Activated CD8-positive, alpha-beta memory T cell treated with anti-CD3 and anti-CD28 coated beads, Interleukin-2, amount 10 ng/mL, durations not matched to agents 7 days and 5 days (primary cell): ENCODE measurements at regions of chr11 and their contacts with region 1.

Region 1: GRCh38 chr11:46616998-46617675 is at the starts of genes ATG13 and HARBI1:
- DNase-seq: peak; percentile 94
- ATAC-seq: peak; percentile 97
- H3K4me3 Mint-ChIP-seq: peak within 1 kb of the TSS; percentile 89
- H3K27ac Mint-ChIP-seq: peak within 1 kb of the TSS; percentile 99
- H3K4me1 Mint-ChIP-seq: peaks cover 40% of the 10 kb centered on the region
- H3K27me3 Mint-ChIP-seq: no peaks in the 10 kb centered on the region
- total RNA-seq, gene ATG13: 64.0 to 72.9 TPM
- total RNA-seq, gene HARBI1: 5.9 to 6.6 TPM

Region 2: DNA sequence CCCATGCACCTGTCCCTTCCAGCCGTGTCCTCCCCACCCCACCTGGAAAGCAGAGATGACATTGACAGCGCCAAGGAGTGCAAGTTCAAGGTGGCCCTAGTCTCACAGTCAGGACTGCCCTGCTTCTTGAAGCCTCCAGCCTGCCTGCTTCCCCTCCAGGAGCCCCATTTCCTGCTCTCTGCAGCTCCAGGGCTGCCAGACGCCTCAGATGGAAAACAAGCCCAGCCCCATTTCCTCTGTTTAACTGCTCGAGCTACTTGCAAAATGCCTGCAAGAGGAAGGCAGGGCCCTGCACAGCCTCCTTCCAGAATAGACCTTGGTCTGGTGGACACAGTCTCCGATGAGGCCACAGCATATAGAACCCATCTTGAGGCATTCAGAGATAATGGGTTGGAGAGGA is 274.9 kb before region 1 on chr11:
- CTCF ChIA-PET with region 1: no interaction called
- DNase-seq: no peak
- ATAC-seq: no peak
- H3K4me3 Mint-ChIP-seq: no peak overlapping the region
- H3K27ac Mint-ChIP-seq: no peak overlapping the region
- H3K4me1 Mint-ChIP-seq: peaks cover 39% of the 10 kb centered on the region
- H3K27me3 Mint-ChIP-seq: peaks cover 23% of the 10 kb centered on the region

Region 3: GRCh38 chr11:46392421-46393230 is 224.5 kb before region 1 on chr11:
- CTCF ChIA-PET with region 1: interaction called, 35 read pairs
- DNase-seq: peak; percentile 85
- ATAC-seq: peak; percentile 84
- H3K4me3 Mint-ChIP-seq: peak overlapping the region; percentile 51
- H3K27ac Mint-ChIP-seq: no peak overlapping the region
- H3K4me1 Mint-ChIP-seq: peaks cover 32% of the 10 kb centered on the region
- H3K27me3 Mint-ChIP-seq: peaks cover 46% of the 10 kb centered on the region

Region 4: DNA sequence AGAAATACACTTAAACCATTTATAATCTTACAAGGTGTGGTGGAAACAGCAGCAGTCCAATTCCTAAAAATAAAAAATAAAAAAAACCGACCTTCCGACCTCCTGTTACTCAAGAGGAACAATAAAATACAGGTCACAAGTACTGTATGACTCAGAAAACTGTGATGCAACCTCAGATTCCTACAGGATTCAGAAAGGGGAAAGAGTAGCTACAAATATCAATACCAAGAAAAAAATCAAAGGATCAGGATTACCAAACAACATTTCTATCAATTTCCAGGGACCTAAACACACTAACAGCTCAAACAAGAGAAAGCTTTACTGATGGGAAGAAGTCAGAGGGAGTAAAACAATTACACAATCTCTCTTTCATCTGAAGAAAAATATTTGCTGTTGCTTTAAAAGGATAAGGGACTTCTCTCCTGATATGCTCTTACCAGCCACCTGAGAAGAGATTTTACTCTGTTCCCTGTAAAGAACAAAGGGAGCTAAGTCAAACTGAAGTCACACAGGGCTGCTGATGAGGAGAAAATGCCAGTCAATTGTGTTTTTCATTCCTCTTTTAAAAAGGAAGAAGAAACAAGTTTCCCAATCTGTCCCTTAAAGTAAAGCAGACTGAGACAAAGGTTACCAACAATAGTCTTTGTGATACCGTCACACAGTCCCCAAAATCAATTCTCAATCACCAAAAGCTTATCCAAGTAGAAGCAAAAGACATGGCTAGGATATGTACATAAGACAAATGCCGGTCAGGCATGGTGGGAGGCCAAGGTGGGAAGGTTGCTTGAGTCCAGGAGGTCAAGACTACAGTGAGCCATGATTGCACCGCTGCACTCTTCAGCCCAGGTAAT is 62.7 kb before region 1 on chr11:
- CTCF ChIA-PET with region 1: interaction called, 13 read pairs
- DNase-seq: no peak
- ATAC-seq: no peak
- H3K4me3 Mint-ChIP-seq: no peak overlapping the region
- H3K27ac Mint-ChIP-seq: peak overlapping the region; percentile 58
- H3K4me1 Mint-ChIP-seq: peaks cover 51% of the 10 kb centered on the region
- H3K27me3 Mint-ChIP-seq: no peaks in the 10 kb centered on the region

Region 5: DNA sequence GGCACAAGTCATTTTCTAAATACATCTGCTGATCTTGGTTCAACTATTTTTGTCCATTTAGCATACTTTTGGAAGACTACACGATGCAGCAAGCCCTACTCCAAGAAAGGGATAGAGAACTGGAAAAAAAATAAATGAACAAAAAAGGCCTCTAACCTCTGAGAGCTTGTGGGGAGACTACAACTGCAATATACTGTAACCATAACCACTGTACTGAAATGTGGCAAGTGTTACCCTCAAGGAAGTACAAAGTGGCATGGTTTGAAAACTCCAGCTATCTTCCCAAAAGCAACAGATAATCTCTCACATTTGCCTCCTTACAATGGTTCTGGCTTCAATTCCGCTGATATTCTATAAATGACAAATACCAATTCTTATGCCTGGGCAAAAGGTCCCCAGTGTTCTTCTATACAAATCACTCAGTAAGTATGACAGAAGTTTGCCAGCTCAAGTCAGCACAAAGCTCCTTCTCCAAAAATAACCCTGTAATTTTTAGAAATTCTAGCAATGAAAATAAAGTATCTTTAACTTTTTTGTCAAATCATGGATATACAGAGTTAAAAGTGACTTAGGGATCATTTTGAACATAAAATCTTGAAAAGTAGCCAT is 46.2 kb before region 1 on chr11:
- CTCF ChIA-PET with region 1: interaction called, 12 read pairs
- DNase-seq: no peak
- ATAC-seq: peak; percentile 57
- H3K4me3 Mint-ChIP-seq: no peak overlapping the region
- H3K27ac Mint-ChIP-seq: peak overlapping the region; percentile 29
- H3K4me1 Mint-ChIP-seq: peaks cover 28% of the 10 kb centered on the region
- H3K27me3 Mint-ChIP-seq: no peaks in the 10 kb centered on the region

Region 6: GRCh38 chr11:46632502-46632901 is 15.4 kb after region 1 on chr11:
- CTCF ChIA-PET with region 1: interaction called, 15 read pairs
- DNase-seq: peak; percentile 61
- ATAC-seq: peak; percentile 72
- H3K4me3 Mint-ChIP-seq: no peak overlapping the region
- H3K27ac Mint-ChIP-seq: peak overlapping the region; percentile 51
- H3K4me1 Mint-ChIP-seq: peaks cover 13% of the 10 kb centered on the region
- H3K27me3 Mint-ChIP-seq: no peaks in the 10 kb centered on the region